Head of caudate nucleus (tissue), 42 donors: ENCODE measurements at regions of chr11 and their contacts with region 1.

Region 1: GRCh38 chr11:130861902-130862860 is 54.1 kb downstream of the SNX19 start:
- DNase-seq: peak; percentile 84 to 98 (median 94)

Region 2: GRCh38 chr11:130315354-130315970 is 546.7 kb before region 1 on chr11:
- intact Hi-C with region 1: no loop called
- DNase-seq: peak in 29 of 42 donors; percentile 4 to 50 (median 22)

Region 3: DNA sequence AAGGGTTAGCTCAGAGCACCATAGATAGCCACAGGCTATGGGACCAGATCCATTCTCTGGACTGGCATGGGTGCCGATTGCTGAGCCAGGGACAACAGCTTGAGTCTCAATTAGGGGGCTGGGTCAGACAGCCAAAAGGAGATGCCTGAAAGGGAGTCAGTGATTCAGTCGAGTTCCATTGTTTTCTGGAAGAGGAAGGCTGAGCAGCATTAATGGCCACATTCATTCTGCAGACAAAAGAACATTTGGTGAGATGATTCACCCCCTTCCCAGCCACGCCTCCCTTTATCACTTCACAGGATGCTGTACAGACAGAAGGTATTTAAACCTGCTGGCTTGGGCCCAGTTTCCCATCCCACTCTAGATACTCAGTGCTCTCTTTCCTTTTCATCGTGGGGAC is 281.8 kb before region 1 on chr11:
- intact Hi-C with region 1: loop called (anchors 5 kb)
- DNase-seq: peak; percentile 16 to 92 (median 76)

Region 4: DNA sequence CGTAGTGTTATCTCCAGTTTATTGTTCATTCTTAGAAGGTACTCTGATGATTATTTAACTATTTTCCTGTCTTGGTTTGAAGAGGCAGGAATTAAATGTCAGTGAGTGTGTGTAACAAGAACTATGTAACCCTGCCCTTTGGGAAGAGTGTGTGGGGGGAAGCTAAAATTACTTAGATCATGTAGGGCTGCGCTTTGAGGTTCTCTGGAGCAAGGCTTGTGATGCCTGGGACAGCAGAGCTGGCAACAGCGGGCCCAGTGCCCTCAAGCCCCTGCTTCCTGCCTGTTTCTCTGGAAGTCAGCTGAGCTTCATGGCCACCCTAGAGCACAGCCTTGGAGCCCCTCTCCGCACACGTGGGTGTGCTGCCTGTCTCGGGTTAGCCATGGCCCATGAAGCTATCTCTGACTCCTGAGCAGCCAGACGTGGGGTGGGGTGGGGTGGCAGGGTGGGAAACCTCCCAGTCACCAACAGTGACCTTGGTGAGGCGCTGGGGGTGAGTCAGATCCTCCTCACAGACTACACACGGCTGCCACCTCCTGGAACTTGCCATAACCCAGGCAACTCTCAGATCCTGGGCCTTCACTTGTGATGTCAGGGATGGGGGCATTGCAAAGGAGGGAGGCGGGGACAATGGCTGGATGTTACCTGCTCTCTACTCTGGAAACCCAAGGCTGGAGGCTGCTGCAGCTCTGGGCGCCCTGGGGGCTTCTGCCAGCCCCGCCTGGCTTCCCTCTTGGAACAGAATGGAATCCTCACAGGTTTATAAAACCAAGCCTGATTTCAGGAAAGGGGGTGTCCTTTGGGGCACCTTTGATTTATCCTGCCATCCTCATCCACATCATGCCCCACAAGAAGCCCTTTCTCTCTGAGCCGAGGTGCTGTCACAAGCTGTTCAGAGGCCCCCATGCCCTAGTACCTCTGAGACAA is 34.5 kb before region 1 on chr11:
- intact Hi-C with region 1: no loop called
- DNase-seq: peak in 41 of 42 donors; percentile 33 to 81 (median 58)